Activated naive CD8-positive, alpha-beta T cell treated with anti-CD3 and anti-CD28 coated beads, Interleukin-2, amount 10 ng/mL, durations not matched to agents 7 days and 5 days (primary cell): ENCODE measurements at regions of chr1 and their contacts with region 1.

Region 1: DNA sequence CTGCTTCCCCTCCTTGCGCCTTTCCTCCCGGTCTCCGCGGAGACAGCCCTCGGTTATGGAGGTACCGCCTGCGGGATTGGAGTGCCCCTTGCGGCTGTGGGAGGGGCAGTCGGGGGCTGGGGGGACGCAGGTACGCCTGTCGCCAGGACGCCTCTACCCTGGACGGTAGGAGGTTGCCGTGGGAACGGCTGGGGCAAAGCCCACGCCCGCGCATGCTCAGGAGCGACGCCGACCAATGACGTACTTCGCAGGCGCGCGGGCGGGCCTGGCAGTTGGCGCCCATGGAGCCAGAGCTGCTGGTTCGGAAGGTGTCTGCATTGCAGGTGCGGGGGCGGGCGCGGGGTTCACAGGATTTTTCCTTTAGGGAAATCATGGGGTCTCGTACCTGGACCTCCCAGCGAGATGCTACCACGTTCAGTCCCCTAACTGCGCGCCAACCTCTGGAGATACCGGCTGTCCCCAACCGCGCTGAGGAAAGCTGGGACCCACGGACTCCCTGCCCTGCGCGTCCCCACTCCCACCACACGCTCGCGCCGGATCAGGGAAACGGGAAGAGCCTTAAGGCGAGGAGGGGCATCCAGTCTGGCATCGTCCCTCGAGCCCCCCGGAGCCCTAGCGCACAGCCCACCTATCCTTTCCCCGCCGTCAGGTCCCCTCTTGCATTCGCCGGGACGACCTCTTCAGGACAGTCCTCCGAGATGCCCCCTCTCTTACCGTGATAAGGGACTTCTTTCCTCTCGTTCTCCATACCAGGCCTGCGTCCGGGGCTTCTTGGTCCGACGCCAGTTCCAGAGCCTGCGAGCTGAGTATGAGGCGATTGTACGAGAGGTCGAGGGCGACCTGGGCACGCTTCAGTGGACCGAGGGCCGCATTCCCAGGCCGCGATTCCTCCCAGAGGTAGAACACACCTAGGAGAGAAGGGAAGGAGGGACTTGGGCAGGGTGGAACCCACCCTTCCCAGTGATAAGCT is at the start of gene IQCC:
- DNase-seq: peak; percentile 87
- ATAC-seq: peak; percentile 74
- H3K4me3 Mint-ChIP-seq: peak within 1 kb of the TSS; percentile 90
- H3K27ac Mint-ChIP-seq: peak within 1 kb of the TSS; percentile 85
- H3K4me1 Mint-ChIP-seq: peaks cover 29% of the 10 kb centered on the region
- H3K27me3 Mint-ChIP-seq: no peaks in the 10 kb centered on the region
- total RNA-seq, gene IQCC: 4.9 to 6.0 TPM

Region 2: GRCh38 chr1:32221980-32222755 is 16.5 kb after region 1 on chr1 and contains the starts of genes EIF3I and TMEM234:
- POLR2A ChIA-PET with region 1: interaction called, 11 read pairs
- DNase-seq: peak; percentile 85
- ATAC-seq: peak; percentile 86
- H3K4me3 Mint-ChIP-seq: peak within 1 kb of the TSS; percentile 96
- H3K27ac Mint-ChIP-seq: peak within 1 kb of the TSS; percentile 95
- H3K4me1 Mint-ChIP-seq: peaks cover 23% of the 10 kb centered on the region
- H3K27me3 Mint-ChIP-seq: no peaks in the 10 kb centered on the region
- total RNA-seq, gene EIF3I: 123 to 130 TPM
- total RNA-seq, gene TMEM234: 15.7 to 16.5 TPM